Ovary (tissue), 10 donors: ENCODE measurements at regions of chr16 and their contacts with region 1.

Region 1: GRCh38 chr16:49036126-49036525 is 245.5 kb downstream of the CBLN1 start:
- DNase-seq: no peak
- H3K4me3 ChIP-seq: no peak overlapping the region
- H3K27ac ChIP-seq: no peak overlapping the region
- H3K4me1 ChIP-seq: no peaks in the 10 kb centered on the region
- H3K27me3 ChIP-seq: no peaks in the 10 kb centered on the region
- CTCF ChIP-seq: no peak
- EP300 ChIP-seq: no peak
- POLR2A ChIP-seq: no peak

Region 2: GRCh38 chr16:48971571-48972077 is 64.5 kb before region 1 on chr16:
- intact Hi-C with region 1: loop called in 1 of 4 experiments (anchors 10 kb)
- DNase-seq: no peak
- H3K4me3 ChIP-seq: no peak overlapping the region
- H3K27ac ChIP-seq: no peak overlapping the region
- H3K4me1 ChIP-seq: no peaks in the 10 kb centered on the region
- H3K27me3 ChIP-seq: no peaks in the 10 kb centered on the region
- CTCF ChIP-seq: no peak
- EP300 ChIP-seq: no peak
- POLR2A ChIP-seq: no peak